IMR-90 (cell line): ENCODE measurements at regions of chr1 and their contacts with region 1.

Region 1: DNA sequence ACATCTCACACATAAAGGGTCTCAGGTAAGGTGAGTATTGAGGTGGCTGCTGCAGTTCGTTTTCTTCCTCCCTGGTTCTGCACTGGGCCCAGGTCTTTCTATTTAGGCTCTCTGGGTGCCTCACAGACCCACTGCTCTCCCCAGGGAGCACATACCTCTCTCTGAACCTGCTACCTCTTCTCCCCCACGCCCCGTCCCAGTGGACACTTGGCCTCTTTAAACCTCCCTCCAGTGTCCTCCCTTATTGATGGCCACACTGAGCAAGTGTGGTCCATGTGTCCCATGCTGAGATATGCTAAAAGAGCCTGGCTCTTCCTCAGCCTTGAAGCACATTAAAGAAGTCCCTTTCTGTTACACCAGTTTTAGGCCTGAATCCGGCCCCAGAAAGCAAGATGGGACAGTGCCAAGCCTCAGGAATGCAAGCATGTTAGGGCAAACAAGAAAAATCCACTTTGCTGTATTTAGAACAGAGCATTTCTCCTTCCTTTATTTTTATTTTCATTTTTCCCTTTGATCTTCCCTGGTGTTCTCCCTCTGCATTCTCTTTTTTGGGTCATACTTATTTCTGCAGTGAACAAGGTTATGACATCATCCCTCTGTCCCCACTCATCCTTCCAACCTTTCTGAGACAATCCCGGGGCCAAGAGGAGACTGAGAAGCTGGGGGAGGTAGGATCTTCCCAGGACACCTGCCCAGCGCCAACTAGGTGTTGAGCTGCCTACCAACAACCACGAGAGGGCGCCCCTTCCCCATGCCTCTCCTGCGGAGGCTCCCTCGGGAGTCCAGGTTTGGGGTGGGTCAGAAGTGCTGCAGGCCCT is 5.0 kb upstream of the CHI3L2 start:
- DNase-seq: peak; percentile 50
- ATAC-seq: peak; percentile 90
- H3K4me3 ChIP-seq: no peak overlapping the region
- H3K27ac ChIP-seq: no peak overlapping the region
- H3K4me1 ChIP-seq: peaks cover 8% of the 10 kb centered on the region
- H3K27me3 ChIP-seq: no peaks in the 10 kb centered on the region
- CTCF ChIP-seq: peak; percentile 89
- POLR2A ChIP-seq: no peak
- RAD21 ChIP-seq: peak; percentile 92

Region 2: GRCh38 chr1:111030590-111030989 is 191.9 kb before region 1 on chr1:
- CTCF ChIA-PET with region 1: no interaction called
- POLR2A ChIA-PET with region 1: no interaction called
- dilution Hi-C with region 1: no loop called
- in situ Hi-C with region 1: no loop called
- intact Hi-C with region 1: loop called (anchors 10 kb)
- DNase-seq: peak; percentile 60
- ATAC-seq: peak; percentile 87
- H3K4me3 ChIP-seq: no peak overlapping the region
- H3K27ac ChIP-seq: no peak overlapping the region
- H3K4me1 ChIP-seq: no peaks in the 10 kb centered on the region
- H3K27me3 ChIP-seq: no peaks in the 10 kb centered on the region
- CTCF ChIP-seq: peak; percentile 77
- POLR2A ChIP-seq: no peak
- RAD21 ChIP-seq: peak; percentile 40; the same call in 1 of the 2 replicates

Region 3: DNA sequence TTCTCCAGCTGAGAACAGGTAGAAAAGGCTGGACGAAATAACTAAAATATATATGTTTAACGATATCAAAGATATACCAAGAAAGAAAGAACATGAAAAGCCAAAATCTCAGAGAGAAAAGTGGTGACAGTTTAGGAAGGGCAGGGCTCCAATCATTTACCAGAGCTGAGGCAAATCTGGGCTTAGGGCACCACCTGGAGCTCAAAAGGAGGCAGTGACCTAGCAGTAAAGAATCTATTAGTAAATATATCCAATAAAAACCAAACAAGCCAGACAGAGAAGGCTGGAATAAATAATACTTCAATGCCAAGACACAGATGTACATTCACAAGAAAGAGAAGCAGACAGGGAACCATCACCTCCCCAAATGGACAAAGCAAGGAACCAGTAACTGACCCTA is 111.7 kb after region 1 on chr1:
- CTCF ChIA-PET with region 1: interaction called, 7 read pairs
- POLR2A ChIA-PET with region 1: no interaction called
- dilution Hi-C with region 1: no loop called
- in situ Hi-C with region 1: loop called (anchors 10 kb)
- intact Hi-C with region 1: loop called (anchors 1 kb)
- DNase-seq: peak; percentile 49
- ATAC-seq: peak; percentile 75
- H3K4me3 ChIP-seq: no peak overlapping the region
- H3K27ac ChIP-seq: no peak overlapping the region
- H3K4me1 ChIP-seq: no peaks in the 10 kb centered on the region
- H3K27me3 ChIP-seq: peaks cover 4% of the 10 kb centered on the region; the same call in 1 of the 2 replicates
- CTCF ChIP-seq: peak; percentile 83
- POLR2A ChIP-seq: no peak
- RAD21 ChIP-seq: peak; percentile 80

Region 4: GRCh38 chr1:111399792-111400610 is 177.5 kb after region 1 on chr1:
- CTCF ChIA-PET with region 1: interaction called, 5 read pairs
- POLR2A ChIA-PET with region 1: no interaction called
- dilution Hi-C with region 1: no loop called
- in situ Hi-C with region 1: no loop called
- intact Hi-C with region 1: loop called (anchors 1 kb)
- DNase-seq: peak; percentile 55
- ATAC-seq: peak; percentile 63
- H3K4me3 ChIP-seq: no peak overlapping the region
- H3K27ac ChIP-seq: no peak overlapping the region
- H3K4me1 ChIP-seq: no peaks in the 10 kb centered on the region
- H3K27me3 ChIP-seq: peaks cover 24% of the 10 kb centered on the region
- CTCF ChIP-seq: peak; percentile 70
- POLR2A ChIP-seq: no peak
- RAD21 ChIP-seq: peak; percentile 72

Region 5: DNA sequence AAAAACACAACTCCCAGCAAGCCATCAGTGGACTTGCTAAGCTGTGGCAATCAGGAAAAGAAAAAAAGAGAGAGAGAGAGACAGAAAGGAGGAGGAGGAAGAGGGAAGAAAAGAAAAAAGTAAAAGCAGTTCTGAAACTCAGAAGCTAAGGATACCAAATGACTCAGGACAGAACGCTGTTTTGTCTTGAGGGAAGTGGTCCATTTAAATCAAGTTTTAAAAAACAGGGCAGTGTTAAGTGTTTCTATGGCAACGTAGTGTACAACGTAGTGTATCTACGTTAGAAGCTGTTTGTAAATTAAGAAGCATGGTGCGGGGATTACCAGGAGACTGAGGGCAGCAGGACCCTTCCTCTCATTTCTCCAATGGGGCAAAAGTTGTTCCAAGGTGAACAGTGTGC is 275.1 kb after region 1 on chr1:
- CTCF ChIA-PET with region 1: no interaction called
- POLR2A ChIA-PET with region 1: no interaction called
- dilution Hi-C with region 1: no loop called
- in situ Hi-C with region 1: no loop called
- intact Hi-C with region 1: no loop called
- DNase-seq: no peak
- ATAC-seq: no peak
- H3K4me3 ChIP-seq: no peak overlapping the region
- H3K27ac ChIP-seq: no peak overlapping the region
- H3K4me1 ChIP-seq: no peaks in the 10 kb centered on the region
- H3K27me3 ChIP-seq: peaks cover 25% of the 10 kb centered on the region
- CTCF ChIP-seq: no peak
- POLR2A ChIP-seq: no peak
- RAD21 ChIP-seq: no peak

Region 6: DNA sequence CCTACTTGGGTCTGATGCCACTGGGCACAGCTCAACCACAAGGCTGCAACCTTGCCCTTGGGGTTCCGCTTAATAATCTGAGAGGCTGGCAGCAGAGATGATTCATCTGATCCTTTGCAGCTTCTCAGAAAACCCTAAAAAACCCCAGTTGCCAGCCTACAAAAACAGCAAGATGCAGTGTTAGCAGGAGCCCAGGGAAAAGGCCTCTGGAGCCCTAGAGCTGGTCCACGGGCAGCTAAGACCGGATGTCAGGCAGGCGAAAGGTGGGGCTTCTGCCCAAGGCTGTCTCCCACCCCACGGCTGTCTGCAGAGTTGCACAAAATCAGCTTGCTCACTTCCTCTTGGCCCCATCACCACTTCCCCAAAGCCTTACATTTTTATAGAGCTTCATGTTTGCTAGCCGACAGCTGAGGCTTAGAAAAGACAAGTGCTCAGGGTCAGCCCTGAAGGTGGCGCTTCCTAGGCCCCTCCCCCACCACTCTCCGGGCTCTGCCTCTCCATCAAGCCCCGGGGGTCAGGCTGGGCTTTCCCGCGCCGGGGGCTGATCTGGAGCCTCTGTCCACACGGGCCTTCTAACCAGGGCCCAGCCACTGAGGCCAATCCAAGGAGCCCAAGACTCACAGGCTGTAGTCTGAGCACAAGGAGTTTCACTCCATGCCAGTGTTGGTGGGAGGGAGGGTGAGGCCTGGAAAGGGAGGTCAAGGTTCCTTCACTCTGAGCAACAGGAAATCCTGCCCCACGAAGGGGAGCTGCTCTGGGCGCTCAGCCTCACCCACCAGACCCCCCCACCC is 285.1 kb after region 1 on chr1:
- CTCF ChIA-PET with region 1: no interaction called
- POLR2A ChIA-PET with region 1: no interaction called
- dilution Hi-C with region 1: no loop called
- in situ Hi-C with region 1: no loop called
- intact Hi-C with region 1: no loop called
- DNase-seq: peak; percentile 55
- ATAC-seq: peak; percentile 81
- H3K4me3 ChIP-seq: no peak overlapping the region
- H3K27ac ChIP-seq: peak overlapping the region; percentile 86
- H3K4me1 ChIP-seq: peaks cover 10% of the 10 kb centered on the region
- H3K27me3 ChIP-seq: peaks cover 8% of the 10 kb centered on the region
- CTCF ChIP-seq: 0 out of 2 replicates have a peak, but pooled peaks have one; percentile 4
- POLR2A ChIP-seq: no peak
- RAD21 ChIP-seq: no peak

Region 7: DNA sequence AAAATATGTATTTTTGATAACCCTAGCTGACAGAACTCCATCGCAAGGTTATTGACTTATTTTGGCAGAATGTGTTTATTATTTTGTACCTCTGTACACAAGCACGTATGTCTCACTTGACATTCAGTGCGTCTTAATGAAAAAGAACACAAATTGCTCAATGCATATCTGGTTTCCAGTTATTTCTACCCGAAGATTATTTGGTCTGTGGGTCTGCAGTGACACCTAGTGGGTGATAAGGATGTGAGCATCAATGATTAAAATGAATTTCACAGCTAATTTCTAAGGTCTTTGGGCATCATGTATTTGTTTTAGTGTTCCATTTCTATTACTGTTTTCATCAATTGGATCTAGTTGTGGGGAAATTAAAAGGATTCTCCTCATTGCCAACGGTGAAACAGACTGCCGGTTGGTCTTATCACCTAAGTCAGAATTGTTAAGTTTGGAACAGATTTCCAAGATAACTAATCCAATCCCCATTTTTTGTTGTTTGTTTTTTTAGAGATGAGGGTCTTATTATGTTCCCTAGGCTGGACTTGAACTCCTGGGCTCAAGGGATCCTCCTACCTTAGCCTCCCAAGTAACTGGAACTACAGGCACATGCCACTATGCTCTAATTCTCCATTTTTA is 547.1 kb after region 1 on chr1:
- CTCF ChIA-PET with region 1: no interaction called
- POLR2A ChIA-PET with region 1: no interaction called
- dilution Hi-C with region 1: no loop called
- in situ Hi-C with region 1: loop called (anchors 10 kb)
- intact Hi-C with region 1: loop called (anchors 5 kb)
- DNase-seq: peak; percentile 78
- ATAC-seq: peak; percentile 74
- H3K4me3 ChIP-seq: no peak overlapping the region
- H3K27ac ChIP-seq: no peak overlapping the region
- H3K4me1 ChIP-seq: no peaks in the 10 kb centered on the region; the same call in 1 of the 2 replicates
- H3K27me3 ChIP-seq: no peaks in the 10 kb centered on the region
- CTCF ChIP-seq: peak; percentile 90
- POLR2A ChIP-seq: no peak
- RAD21 ChIP-seq: peak; percentile 94